ENCODE measurements at regions of chr14 and their contacts with region 1.

Region 1: DNA sequence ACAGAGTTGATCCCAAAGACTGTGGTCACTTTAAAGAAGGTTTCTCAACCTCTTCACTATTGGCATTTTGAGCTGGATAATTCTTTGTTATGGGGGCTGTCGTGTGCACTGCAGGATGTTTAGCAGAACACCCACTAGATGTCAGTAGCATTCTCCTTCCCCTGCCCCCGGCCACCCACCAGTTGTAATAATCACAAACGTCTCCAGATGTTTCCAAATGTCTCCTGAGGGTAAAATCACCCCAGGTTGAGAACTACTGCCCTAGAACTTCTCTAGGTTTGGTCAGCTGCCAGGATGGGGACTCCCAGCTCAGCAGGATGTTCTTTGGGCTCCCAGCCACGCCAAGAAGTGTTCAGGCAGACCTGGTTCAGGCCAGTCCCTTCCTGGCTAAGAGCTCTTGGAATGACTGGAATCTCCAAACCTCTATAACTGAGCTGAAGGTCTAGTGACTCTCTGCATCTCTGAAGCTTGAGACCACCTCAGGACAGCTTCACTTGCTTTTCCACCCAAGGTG is 12.5 kb upstream of the AJUBA start:
- DNase-seq: peak; percentile 52
- ATAC-seq: peak; percentile 90
- H3K4me3 ChIP-seq: no peak overlapping the region
- H3K27ac ChIP-seq: no peak overlapping the region
- H3K4me1 ChIP-seq: peaks cover 5% of the 10 kb centered on the region; the same call in 1 of the 2 replicates
- H3K27me3 ChIP-seq: no peaks in the 10 kb centered on the region
- CTCF ChIP-seq: peak; percentile 76

Region 2: DNA sequence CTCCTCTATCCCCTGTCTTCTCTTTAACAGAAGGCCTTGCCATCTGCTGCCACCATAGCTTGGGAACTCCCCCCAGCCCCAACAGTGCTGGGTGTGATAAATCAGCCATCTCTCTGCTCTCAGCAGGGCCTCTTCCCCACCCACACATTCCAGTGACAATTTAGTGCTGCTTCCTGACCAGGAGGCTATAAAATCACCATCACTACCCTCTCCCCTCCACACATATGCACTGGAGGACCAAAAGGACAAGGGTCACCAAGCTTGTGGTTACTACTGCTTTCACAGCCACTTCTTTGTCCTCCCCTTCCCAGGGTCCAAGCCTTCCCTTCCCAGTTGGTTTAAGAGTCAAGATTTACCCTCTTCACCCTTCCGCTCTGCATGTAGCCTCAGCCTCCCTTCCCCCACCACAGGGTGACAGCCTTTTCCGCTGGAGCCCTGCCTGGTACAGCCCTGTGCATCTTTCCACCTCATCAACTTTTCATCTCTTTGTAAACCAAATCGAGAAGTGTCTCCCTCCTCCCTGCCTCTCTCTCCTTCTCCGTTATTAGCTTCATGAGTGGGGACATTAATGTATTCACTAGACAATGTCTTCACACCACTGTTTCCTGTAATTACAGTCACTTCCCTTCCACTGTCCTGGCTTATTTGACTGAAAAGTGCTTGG is 30.5 kb after region 1 on chr14:
- CTCF ChIA-PET with region 1: no interaction called
- POLR2A ChIA-PET with region 1: no interaction called
- intact Hi-C with region 1: loop called (anchors 2 kb)
- DNase-seq: no peak
- ATAC-seq: peak; percentile 21; the same call in 1 of the 2 replicates
- H3K4me3 ChIP-seq: no peak overlapping the region
- H3K27ac ChIP-seq: no peak overlapping the region
- H3K4me1 ChIP-seq: no peaks in the 10 kb centered on the region
- H3K27me3 ChIP-seq: no peaks in the 10 kb centered on the region
- CTCF ChIP-seq: no peak

Region 3: DNA sequence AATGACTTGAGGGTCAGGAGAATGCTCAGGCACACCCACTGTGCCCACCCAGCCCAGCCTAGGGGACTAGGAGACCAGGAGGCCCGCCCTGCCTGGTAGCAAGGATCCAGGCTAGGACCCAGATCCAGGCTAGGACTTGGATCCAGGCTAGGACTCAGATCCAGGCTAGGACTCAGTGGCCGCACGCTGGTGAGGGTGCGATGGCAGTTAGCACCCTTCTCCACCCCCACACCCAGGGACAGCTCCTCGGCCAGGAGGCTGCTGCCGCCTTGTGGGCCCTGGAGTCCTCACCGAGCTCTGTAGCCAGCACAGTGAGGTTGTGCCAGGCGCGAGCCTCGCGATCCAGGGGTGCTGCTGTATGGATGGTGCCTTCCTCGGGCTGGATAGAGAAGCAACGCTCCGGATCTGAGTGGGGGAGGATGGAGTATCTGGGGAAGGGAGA is 57.4 kb after region 1 on chr14:
- CTCF ChIA-PET with region 1: interaction called, 20 read pairs
- POLR2A ChIA-PET with region 1: no interaction called
- intact Hi-C with region 1: no loop called
- DNase-seq: no peak
- ATAC-seq: no peak
- H3K4me3 ChIP-seq: no peak overlapping the region
- H3K27ac ChIP-seq: no peak overlapping the region
- H3K4me1 ChIP-seq: peaks cover 8% of the 10 kb centered on the region
- H3K27me3 ChIP-seq: no peaks in the 10 kb centered on the region
- CTCF ChIP-seq: peak; percentile 24; the same call in 1 of the 2 replicates

Region 4: DNA sequence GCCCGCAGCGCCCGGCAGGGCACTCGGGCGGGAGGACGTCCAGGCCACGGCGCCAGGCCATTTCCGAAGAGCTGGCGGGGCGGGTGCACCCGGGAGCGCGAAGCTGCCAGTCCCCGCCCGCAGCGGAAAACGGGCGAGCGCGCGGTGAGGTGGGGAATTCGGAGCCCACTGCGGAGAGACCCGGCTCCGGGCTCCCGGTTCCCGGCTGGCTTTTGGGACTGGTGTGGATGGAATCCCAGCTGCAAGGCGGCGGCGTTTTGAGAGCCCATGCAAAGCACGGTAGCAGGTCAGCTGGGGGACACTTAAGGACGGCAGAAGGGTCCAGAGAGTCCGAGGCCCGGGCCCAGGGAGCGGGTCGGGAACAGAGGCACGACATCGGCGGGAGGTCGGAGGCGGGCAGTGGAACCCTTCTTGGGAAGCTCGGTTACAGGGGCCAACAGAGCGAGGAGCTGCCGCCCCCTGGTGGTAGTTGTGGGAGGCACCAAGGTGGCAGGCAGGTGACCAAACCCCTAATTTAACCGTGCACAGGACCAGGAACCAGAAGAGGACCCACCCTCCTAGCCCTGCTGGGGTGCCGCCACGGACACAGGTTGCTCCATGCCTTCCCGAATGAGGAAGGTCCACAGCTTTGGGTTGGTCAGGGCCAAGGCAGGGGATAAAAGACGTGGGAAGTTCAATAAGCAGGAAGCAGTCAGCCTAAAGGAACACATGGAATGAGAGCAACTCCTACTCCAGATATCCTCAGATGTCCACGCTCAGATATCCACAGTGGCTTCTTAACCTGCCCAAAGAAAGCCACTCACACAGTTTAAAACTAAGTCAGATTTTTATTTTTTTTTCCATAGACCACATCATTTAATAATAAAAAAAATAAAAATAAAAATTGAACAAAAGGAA is 63.2 kb after region 1 on chr14:
- CTCF ChIA-PET with region 1: interaction called, 20 read pairs
- POLR2A ChIA-PET with region 1: no interaction called
- intact Hi-C with region 1: loop called (anchors 1 kb)
- DNase-seq: peak; percentile 90
- ATAC-seq: peak; percentile 69
- H3K4me3 ChIP-seq: peak overlapping the region; percentile 85
- H3K27ac ChIP-seq: no peak overlapping the region
- H3K4me1 ChIP-seq: peaks cover 21% of the 10 kb centered on the region
- H3K27me3 ChIP-seq: no peaks in the 10 kb centered on the region
- CTCF ChIP-seq: peak; percentile 94

Measured in PC-3 (cell line).